Uterus (tissue), 4 donors: ENCODE measurements at regions of chr14 and their contacts with region 1.

Region 1: DNA sequence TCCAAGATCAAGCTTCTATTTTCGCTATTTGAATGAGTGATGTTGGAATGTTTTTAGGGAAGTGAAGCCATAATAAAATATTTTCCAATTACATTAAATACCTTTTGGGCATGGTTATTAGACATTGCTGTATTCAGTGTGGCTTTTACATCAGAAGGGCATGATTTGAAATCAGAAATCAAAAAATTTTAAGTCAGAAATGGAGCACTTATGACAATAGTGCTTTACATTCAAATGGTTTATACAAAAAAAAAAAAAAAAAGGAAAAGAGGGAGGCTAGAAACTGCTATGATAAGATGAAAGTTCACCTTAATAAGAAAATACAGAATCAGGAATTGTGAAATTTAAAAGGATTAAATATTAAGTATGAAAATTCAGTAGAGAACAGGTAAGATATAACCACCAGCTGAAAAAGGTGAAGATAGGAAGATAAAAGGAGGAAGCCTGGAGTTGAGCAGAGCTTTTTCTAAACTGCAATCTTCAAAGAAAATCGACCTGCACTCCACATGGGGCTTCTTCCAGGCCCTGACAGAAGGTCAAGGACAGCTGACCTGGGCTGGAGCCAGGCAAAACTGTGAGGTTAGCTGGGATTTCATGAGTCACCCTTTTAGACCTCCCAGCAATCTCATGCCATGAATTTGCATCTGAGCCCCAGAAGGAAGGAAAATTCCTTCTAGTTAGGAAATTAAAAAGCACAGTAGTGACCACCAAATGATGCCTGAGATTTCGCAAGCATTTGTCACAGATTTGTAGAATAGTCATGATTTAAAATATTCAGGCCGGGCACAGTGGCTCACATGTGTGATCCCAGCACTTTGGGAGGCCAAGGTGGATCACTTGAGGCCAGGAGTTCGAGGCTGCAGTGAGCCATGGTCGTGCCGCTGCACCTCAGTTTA is 23.4 kb upstream of the BMP4 start:
- DNase-seq: peak in 1 of 2 donors; percentile 24
- H3K4me3 ChIP-seq: no peak overlapping the region
- H3K27ac ChIP-seq: no peak overlapping the region
- H3K4me1 ChIP-seq: no peaks in the 10 kb centered on the region
- H3K27me3 ChIP-seq: no peaks in the 10 kb centered on the region
- CTCF ChIP-seq: no peak
- POLR2A ChIP-seq: no peak

Region 2: GRCh38 chr14:53929871-53930715 is 49.9 kb before region 1 on chr14:
- intact Hi-C with region 1: loop called (anchors 10 kb)
- DNase-seq: no peak
- H3K4me3 ChIP-seq: no peak overlapping the region
- H3K27ac ChIP-seq: no peak overlapping the region
- H3K4me1 ChIP-seq: no peaks in the 10 kb centered on the region
- H3K27me3 ChIP-seq: no peaks in the 10 kb centered on the region
- CTCF ChIP-seq: peak in 2 of 4 experiments; percentile 14 to 23
- POLR2A ChIP-seq: no peak

Region 3: DNA sequence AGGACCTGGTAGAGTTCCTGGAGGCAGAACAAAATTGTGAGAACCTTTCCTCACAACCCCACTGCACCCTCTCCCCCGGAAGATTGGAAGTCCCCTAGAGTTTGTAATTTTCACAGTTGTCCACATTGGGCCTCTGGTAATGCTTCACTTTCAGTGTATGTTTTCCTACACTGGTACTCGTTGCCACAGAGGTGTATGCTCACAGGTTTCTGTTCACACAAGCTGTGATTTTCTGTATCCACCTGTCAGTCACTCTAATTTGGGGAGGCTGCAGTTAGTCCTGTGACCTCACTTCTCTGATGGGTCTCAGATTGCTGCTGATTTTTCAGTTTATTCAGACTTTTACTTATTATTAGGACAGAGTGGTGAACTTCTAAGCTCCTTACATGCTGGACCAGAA is 43.0 kb after region 1 on chr14:
- intact Hi-C with region 1: no loop called
- DNase-seq: no peak
- H3K4me3 ChIP-seq: no peak overlapping the region
- H3K27ac ChIP-seq: no peak overlapping the region
- H3K4me1 ChIP-seq: no peaks in the 10 kb centered on the region
- H3K27me3 ChIP-seq: no peaks in the 10 kb centered on the region
- CTCF ChIP-seq: no peak
- POLR2A ChIP-seq: no peak

Region 4: GRCh38 chr14:54366736-54367735 is 387.0 kb after region 1 on chr14:
- intact Hi-C with region 1: no loop called
- DNase-seq: peak in 1 of 2 donors; percentile 46
- H3K4me3 ChIP-seq: no peak overlapping the region
- H3K27ac ChIP-seq: peak overlapping the region in 1 of 2 donors; percentile 17
- H3K4me1 ChIP-seq: no peaks in the 10 kb centered on the region
- H3K27me3 ChIP-seq: no peaks in the 10 kb centered on the region
- CTCF ChIP-seq: peak; percentile 30 to 41 (median 35)
- POLR2A ChIP-seq: no peak